Head of caudate nucleus (tissue), 42 donors: ENCODE measurements at regions of chr16 and their contacts with region 1.

Region 1: DNA sequence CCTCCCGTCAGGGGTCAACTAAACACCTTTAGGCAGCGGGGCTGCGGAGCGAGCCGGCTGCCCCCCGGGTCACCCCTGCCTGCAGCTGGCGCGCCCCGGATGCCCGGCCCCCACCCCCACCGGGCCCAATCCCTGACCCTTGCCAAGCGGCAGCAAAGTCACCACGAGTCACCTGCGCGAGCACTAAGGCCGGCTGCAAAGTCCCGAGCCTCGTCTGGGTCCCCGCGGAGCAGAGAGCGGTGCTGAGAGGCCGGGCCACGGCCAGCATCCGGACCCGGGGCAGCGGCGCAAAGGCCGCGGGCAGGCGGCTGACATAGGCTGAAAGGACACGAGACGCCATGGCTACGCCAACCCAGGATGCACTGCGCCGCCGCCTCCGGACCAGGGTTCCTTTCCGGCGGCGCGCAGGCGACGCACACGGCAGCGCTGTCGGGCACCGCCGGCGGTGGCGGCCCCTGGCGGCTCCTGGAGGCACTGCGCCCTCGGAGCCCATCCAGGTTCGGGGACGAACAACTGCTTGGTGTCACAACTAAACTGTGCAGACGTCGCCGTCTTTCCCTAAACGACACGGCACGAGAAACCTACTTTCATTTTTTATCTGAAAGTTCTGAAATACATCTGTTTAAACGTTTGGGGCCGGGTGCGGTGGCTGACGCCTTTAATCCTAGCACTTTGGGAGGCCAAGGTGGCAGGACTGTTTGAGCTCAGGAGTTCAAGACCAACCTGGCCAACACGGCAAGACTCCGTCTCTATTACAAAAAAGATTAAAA is at the start of gene NDUFAB1:
- DNase-seq: peak; percentile 80 to 97 (median 94)

Region 2: GRCh38 chr16:23640931-23641765 is 45.0 kb after region 1 on chr16 and contains the starts of genes DCTN5 and PALB2:
- intact Hi-C with region 1: loop called (anchors 10 kb)
- DNase-seq: peak; percentile 91 to 97 (median 94)